Ascending aorta (tissue), 2 donors: ENCODE measurements at regions of chr6 and their contacts with region 1.

Region 1: DNA sequence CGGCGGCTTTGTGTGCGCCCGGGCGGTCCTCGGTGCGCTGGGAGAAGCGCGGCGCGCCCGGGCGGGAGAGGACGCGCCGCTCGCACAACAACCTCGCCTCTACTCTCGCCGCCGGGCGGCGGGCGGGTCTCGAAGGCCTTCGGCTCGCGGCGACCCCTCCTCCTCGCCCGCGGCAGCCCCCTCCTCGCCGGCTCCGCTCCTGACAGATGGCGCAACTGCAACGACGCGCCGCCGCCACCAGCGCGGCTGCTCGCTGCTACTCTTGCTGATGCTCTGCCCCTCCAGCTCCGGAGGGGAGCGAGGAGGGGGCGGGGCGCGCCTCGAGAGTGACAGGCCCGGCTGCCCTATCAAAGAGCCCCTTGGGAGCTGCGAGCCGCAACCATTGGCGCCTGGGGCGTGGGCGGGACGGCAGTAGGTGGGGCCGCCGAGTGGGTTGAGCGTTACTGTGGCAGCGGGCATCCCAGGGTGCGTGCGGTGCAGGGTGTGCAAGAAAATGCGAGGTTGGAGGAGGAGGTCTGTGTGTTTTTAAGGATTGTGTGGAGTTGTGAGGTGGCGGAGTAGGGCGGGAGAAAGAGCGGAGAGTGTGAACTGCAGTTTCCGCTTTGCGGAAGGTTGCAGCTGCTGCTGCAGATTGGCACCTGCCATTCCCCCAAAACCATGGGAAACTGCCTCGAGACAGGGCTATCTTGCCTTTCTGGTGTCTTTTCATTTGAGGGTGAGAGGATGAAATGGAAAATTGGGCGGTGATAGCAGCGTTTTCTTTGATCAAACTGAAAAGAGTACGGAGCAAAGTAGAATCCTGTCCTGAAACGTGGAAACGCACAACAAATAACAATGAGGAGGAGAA is at the start of gene FYN:
- DNase-seq: peak; percentile 93 to 99
- H3K4me3 ChIP-seq: peak within 1 kb of the TSS; percentile 79 to 83
- H3K27ac ChIP-seq: peak within 1 kb of the TSS; percentile 67 to 74
- H3K4me1 ChIP-seq: peaks cover 0 to 5% of the 10 kb centered on the region in 2 donors
- H3K27me3 ChIP-seq: no peaks in the 10 kb centered on the region
- CTCF ChIP-seq: peak; percentile 39 to 72 (median 53)
- total RNA-seq, gene FYN: 141 TPM

Region 2: GRCh38 chr6:111709615-111710398 is 163.6 kb before region 1 on chr6:
- intact Hi-C with region 1: loop called (anchors 1 kb)
- DNase-seq: peak in 1 of 2 donors; percentile 78
- H3K4me3 ChIP-seq: peak overlapping the region in 1 of 2 donors; percentile 46
- H3K27ac ChIP-seq: no peak overlapping the region
- H3K4me1 ChIP-seq: peaks cover 0 to 6% of the 10 kb centered on the region in 2 donors
- H3K27me3 ChIP-seq: no peaks in the 10 kb centered on the region
- CTCF ChIP-seq: peak; percentile 58 to 79 (median 77)

Region 3: DNA sequence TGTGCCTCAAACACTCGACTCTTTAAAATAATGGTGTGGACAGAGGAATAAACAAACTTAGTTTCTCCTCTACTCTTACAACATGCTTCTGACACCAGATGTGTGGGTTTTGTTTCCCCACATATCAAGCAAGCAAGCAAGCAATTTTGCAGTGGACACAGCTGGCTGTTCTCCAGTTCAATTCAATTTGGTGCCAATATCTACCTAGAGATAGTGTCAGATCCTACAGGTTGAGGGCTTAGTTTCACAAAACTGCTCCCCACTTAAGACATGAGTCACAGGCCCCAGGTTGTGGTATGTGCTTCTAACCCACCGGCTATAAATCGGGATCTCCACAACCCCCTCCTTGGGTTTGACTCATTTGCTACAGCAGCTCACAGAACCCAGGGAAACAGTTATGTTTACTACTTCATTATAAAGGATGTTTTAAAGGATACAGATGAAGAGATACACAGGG is 136.3 kb before region 1 on chr6:
- intact Hi-C with region 1: no loop called
- DNase-seq: no peak
- H3K4me3 ChIP-seq: no peak overlapping the region
- H3K27ac ChIP-seq: no peak overlapping the region
- H3K4me1 ChIP-seq: no peaks in the 10 kb centered on the region
- H3K27me3 ChIP-seq: no peaks in the 10 kb centered on the region
- CTCF ChIP-seq: no peak

Region 4: DNA sequence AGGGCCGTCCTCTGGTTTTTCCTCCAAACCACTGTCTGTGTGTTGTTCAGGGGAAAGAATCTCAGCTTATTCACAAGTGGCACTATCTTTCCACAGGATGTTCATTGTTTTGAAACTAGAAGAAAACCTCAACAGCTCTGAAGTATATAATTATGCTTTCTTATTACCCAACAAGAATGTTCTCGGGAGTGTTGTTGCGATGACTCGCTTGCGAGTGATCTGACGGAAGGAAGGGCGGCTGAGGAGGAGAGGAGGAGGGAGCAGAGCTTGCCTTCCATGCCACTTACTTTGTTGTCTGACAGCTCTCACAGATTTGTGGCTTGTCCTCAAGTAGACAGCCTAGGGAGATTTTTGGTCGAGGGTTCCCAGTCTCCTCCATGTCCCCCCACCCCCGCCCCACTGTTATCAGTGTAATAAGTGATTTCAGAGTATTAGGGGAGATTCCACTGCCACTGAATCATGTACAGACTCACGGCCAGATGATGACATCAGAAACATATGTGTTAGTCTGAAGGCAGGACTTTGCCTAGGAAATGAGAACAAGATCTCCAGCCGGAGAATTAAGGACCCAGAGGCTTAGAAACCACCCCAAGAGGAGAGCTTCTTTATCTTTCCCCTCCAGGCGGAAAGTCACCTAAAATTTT is 99.8 kb after region 1 on chr6:
- intact Hi-C with region 1: loop called (anchors 2 kb)
- DNase-seq: peak; percentile 16 to 83
- H3K4me3 ChIP-seq: peak overlapping the region; percentile 14 to 37
- H3K27ac ChIP-seq: peak overlapping the region; percentile 54 to 59
- H3K4me1 ChIP-seq: peaks cover 2 to 5% of the 10 kb centered on the region in 2 donors
- H3K27me3 ChIP-seq: no peaks in the 10 kb centered on the region
- CTCF ChIP-seq: no peak

Region 5: GRCh38 chr6:112037783-112038216 is 164.4 kb after region 1 on chr6:
- intact Hi-C with region 1: no loop called
- DNase-seq: peak; percentile 54 to 96
- H3K4me3 ChIP-seq: no peak overlapping the region
- H3K27ac ChIP-seq: peak overlapping the region; percentile 83 to 93
- H3K4me1 ChIP-seq: peaks cover 5 to 29% of the 10 kb centered on the region in 2 donors
- H3K27me3 ChIP-seq: no peaks in the 10 kb centered on the region
- CTCF ChIP-seq: no peak

Region 6: GRCh38 chr6:112311950-112312547 is 438.6 kb after region 1 on chr6:
- intact Hi-C with region 1: no loop called
- DNase-seq: no peak
- H3K4me3 ChIP-seq: no peak overlapping the region
- H3K27ac ChIP-seq: no peak overlapping the region
- H3K4me1 ChIP-seq: no peaks in the 10 kb centered on the region
- H3K27me3 ChIP-seq: no peaks in the 10 kb centered on the region
- CTCF ChIP-seq: peak; percentile 45 to 78 (median 54)